ENCODE measurements at regions of chr20 and their contacts with region 1.

Region 1: GRCh38 chr20:11676630-11677284 is 240.9 kb upstream of the BTBD3 start:
- DNase-seq: peak; percentile 50
- H3K4me3 ChIP-seq: no peak overlapping the region
- H3K27ac ChIP-seq: no peak overlapping the region
- H3K4me1 ChIP-seq: no peaks in the 10 kb centered on the region
- H3K27me3 ChIP-seq: no peaks in the 10 kb centered on the region
- CTCF ChIP-seq: peak; percentile 73

Region 2: DNA sequence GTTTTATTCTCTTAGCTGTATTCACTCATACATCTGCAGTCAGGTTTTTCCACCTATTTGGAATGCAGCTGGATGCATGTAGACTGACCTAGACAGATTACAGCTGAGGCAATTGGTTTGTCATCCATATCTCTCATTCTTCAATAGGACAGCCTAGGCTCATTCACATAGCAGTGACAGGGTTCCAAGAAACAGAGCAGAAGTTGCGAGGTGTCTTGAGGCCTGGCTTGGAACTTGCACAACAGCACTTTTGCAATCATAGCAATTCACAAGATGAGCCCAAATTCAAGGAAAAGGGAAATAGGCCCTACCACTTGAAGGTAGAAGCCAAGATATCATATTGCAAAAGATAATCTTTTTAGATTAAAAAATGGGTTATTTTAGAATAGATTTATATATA is 494.0 kb before region 1 on chr20:
- intact Hi-C with region 1: no loop called
- DNase-seq: no peak
- H3K4me3 ChIP-seq: no peak overlapping the region
- H3K27ac ChIP-seq: no peak overlapping the region
- H3K4me1 ChIP-seq: no peaks in the 10 kb centered on the region
- H3K27me3 ChIP-seq: no peaks in the 10 kb centered on the region
- CTCF ChIP-seq: no peak

Region 3: DNA sequence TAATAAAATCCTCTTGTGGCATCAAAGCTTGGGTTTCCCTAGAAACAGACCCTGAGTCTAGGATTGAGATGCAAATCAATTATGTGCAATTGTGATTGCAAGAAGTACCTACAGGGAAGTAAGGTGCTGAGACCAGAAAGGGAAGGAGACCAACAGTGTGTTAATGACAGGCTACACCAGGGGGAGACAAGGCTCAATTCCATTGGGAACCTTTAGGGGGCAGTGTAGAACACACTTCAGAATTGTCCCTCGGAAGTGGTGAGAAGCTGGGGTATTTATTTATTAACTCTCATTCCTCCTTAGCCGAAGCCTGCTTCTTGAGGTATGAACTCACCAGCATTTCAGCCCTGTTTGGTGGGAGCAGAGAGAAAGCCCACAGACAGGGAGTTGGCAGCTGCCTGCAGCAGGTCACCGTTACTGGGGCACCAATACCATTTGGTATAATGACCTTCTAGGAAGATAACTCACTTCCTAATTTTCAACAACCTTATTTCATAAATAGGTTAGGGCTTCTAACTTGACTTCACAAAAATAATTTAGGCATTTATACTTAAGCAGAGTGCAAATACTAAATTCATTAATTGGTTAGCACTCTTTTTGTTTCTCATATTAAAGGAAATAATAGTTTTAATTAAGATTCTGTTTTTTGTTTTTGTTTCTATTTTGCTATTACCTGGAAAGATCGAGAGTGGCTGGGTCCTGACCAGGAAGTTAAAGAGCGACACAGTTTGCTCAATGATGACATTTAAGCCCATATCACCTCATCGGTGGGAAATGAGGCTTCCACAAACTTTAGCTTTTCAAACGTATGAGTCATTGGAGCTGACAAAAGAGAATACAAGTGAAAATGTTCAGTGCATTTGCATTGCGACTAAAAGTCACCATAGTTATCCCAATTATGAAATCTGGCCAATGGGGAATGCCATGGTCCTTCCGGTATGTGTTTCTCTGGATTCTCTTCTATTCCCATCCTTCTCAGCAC is 335.8 kb after region 1 on chr20:
- intact Hi-C with region 1: loop called (anchors 10 kb)
- DNase-seq: peak; percentile 66
- H3K4me3 ChIP-seq: no peak overlapping the region
- H3K27ac ChIP-seq: no peak overlapping the region
- H3K4me1 ChIP-seq: no peaks in the 10 kb centered on the region
- H3K27me3 ChIP-seq: no peaks in the 10 kb centered on the region
- CTCF ChIP-seq: peak; percentile 91

Region 4: DNA sequence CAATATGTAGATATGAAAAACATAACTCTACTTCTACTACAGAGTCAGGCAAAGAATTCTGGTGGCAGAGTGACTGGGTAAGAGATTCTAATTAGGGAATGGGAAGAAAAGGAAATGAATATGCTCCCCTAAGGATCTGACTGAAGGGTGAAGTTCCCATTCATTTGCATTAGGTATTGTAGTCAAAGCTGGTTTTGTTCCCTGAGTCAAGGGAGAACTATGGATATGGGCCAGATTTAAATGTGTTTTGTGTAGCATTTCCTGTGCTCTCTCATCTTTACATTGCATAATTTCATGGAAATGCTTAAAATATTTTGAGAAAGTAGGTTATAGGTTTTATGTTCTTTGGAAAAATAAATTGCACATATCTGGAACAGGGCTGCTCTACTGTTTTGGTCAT is 540.6 kb after region 1 on chr20:
- intact Hi-C with region 1: loop called (anchors 10 kb)
- DNase-seq: no peak
- H3K4me3 ChIP-seq: no peak overlapping the region
- H3K27ac ChIP-seq: no peak overlapping the region
- H3K4me1 ChIP-seq: no peaks in the 10 kb centered on the region
- H3K27me3 ChIP-seq: no peaks in the 10 kb centered on the region
- CTCF ChIP-seq: no peak

Measured in colonic mucosa (tissue), 4 donors.